ENCODE measurements at regions of chr6 and their contacts with region 1.

Region 1: DNA sequence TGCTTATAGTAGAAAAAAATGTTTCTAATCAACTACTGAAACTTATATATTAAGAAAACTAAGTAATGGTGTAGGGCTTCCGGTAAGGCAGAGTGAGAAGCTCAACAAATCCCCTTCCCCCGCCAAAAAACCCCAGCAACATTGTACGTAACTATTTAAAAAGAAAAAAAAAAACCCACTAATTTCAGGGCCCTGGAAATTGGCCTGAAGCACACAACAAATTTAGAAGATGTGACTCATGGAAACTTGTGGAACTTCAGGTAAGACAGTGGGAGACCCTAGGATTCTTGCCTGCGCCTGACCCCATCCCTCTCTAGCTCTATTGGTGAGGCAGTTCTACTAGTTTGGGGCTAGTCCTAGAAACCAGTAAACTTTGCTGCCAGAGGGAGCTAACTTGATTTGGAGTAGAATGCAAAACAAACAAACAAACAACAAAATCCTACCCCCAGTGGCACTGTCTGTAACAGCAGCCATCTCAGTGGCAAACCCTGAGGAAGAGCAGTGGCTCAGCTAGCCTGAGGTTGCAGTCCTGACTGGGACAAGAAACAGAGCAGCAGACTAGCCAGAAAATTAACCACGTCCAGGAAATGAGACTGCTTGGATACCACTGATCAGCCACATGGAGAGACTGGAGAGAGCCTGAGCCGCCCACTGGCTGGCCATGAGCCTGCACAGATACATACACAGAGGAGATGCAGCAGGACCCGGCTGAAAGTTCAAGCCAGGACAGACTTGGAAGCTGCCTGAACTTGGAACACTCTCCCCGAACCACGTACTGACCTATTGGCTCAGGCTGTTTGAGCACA is 135.1 kb downstream of the TBXT start:
- H3K4me3 ChIP-seq: no peak overlapping the region
- H3K27ac ChIP-seq: no peak overlapping the region
- H3K4me1 ChIP-seq: no peaks in the 10 kb centered on the region
- CTCF ChIP-seq: peak; percentile 42; the same call in 1 of the 2 replicates

Region 2: GRCh38 chr6:166046226-166046625 is 13.7 kb after region 1 on chr6:
- CTCF ChIA-PET with region 1: interaction called, 13 read pairs
- POLR2A ChIA-PET with region 1: no interaction called
- H3K4me3 ChIP-seq: no peak overlapping the region
- H3K27ac ChIP-seq: no peak overlapping the region
- H3K4me1 ChIP-seq: no peaks in the 10 kb centered on the region
- CTCF ChIP-seq: no peak

Measured in HEK293 (cell line).